ENCODE measurements at regions of chr3 and their contacts with region 1.

Region 1: DNA sequence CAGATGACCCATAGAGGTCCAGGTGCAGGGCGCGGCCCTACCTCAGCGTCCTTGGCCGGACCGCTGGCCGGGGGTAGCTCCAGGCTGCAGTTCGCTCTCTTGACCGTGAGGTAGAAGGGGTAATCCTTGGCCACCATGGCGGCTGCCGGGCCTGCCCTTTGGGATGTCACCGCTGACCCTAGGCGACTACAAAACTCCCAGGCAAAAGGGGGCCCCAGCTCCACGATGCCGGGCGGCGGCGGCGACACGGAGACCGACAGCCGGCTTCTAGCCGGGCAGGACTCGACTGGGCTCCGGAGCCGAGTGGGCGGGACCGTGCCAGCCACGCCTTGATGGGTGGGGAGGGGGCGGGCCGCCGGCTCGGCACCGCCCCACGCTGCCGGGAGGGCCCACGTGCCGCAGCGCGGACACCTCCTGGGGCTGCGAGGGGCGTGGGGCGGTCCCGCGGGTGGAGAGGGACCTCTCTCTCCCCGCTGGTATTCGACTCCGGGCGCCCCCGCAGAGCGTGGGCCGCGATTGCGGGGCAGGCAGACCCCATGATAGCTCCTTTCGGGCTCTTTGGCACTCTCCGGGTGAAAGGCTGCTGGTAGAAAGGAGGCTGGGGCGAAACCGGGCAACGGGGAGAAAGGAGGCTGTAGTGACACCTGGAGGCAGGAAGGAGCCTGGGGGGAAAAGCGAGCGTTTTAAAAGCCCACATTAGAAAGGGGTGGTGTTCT is at the start of gene ARHGEF3:
- DNase-seq: peak; percentile 86 to 90 (median 86)
- H3K4me3 ChIP-seq: peak within 1 kb of the TSS; percentile 86 to 87
- H3K4me3 Mint-ChIP-seq: peak within 1 kb of the TSS; percentile 92 to 99 (median 96)
- H3K27ac ChIP-seq: peak within 1 kb of the TSS; percentile 79
- H3K27ac Mint-ChIP-seq: peak within 1 kb of the TSS; percentile 85 to 98 (median 92)
- H3K4me1 ChIP-seq: peaks cover 38% of the 10 kb centered on the region
- H3K4me1 Mint-ChIP-seq: peaks cover 33 to 64% (median 43%) of the 10 kb centered on the region in 4 donors
- H3K27me3 ChIP-seq: no peaks in the 10 kb centered on the region
- H3K27me3 Mint-ChIP-seq: no peaks in the 10 kb centered on the region
- total RNA-seq, gene ARHGEF3: 120 TPM

Region 2: DNA sequence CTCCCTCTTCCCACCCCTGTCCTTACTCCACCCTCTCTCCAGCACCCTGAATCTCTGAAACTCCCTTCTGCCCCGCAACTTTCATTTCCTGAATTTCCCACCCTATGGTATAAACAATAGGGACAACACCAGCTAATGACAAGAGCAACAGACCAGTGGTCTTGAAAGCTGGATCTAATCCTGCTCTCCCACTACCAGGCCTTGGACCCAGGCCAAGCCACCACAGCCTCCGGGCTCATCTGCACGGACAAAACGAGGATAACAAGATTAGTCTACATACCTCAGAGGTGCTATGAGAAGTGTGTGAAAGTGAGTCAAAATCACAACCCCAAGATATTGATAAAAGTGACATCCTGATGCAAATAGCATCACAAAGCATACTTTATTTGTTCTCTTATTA is 462.1 kb before region 1 on chr3:
- CTCF ChIA-PET with region 1: no interaction called
- POLR2A ChIA-PET with region 1: no interaction called
- intact Hi-C with region 1: loop called (anchors 2 kb)
- DNase-seq: no peak
- H3K4me3 ChIP-seq: no peak overlapping the region
- H3K4me3 Mint-ChIP-seq: no peak overlapping the region
- H3K27ac ChIP-seq: no peak overlapping the region
- H3K27ac Mint-ChIP-seq: no peak overlapping the region
- H3K4me1 ChIP-seq: no peaks in the 10 kb centered on the region
- H3K4me1 Mint-ChIP-seq: no peaks in the 10 kb centered on the region
- H3K27me3 ChIP-seq: no peaks in the 10 kb centered on the region
- H3K27me3 Mint-ChIP-seq: peaks cover 3 to 7% of the 10 kb centered on the region in 2 donors

Region 3: GRCh38 chr3:56711344-56711743 is 90.5 kb before region 1 on chr3:
- CTCF ChIA-PET with region 1: interaction called, 213 read pairs
- POLR2A ChIA-PET with region 1: interaction called, 9 read pairs
- intact Hi-C with region 1: no loop called
- DNase-seq: no peak
- H3K4me3 ChIP-seq: no peak overlapping the region
- H3K4me3 Mint-ChIP-seq: no peak overlapping the region
- H3K27ac ChIP-seq: no peak overlapping the region
- H3K27ac Mint-ChIP-seq: peak overlapping the region in 2 of 7 donors; percentile 13 to 31
- H3K4me1 ChIP-seq: no peaks in the 10 kb centered on the region
- H3K4me1 Mint-ChIP-seq: peaks cover 0 to 2% (median 0%) of the 10 kb centered on the region in 4 donors
- H3K27me3 ChIP-seq: no peaks in the 10 kb centered on the region
- H3K27me3 Mint-ChIP-seq: no peaks in the 10 kb centered on the region

Region 4: DNA sequence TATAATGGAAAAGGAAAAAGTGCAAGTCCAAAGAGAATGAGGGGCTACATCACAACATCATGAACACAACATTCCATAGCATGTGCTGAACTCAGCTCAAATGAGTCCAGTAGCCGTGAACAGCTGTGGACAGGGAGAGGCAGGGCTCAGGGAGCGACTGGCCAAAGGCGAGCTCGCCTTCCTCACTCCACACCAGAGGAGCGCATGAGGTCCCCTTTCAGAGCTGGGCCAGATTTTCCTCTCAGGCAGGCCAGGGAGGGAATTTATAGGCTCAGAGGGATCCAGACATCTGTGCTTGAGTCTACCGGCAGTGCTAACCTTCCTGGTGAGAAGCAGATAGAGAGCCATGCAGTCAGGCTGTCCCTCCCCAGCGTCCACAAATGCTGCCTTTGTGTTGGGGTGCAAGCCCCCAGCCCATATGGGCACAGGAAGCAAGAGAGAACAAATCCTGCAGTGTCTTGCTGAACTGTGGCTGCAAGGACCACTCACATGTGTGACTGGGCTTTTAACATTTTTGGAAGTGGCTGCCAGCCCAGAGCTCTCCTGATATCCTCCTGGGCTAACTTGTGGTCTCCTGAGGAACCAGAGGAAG is 32.6 kb before region 1 on chr3:
- CTCF ChIA-PET with region 1: interaction called, 28 read pairs
- POLR2A ChIA-PET with region 1: interaction called, 7 read pairs
- intact Hi-C with region 1: no loop called
- DNase-seq: no peak
- H3K4me3 ChIP-seq: no peak overlapping the region
- H3K4me3 Mint-ChIP-seq: no peak overlapping the region
- H3K27ac ChIP-seq: no peak overlapping the region
- H3K27ac Mint-ChIP-seq: peak overlapping the region in 6 of 7 donors; percentile 9 to 79 (median 38)
- H3K4me1 ChIP-seq: peaks cover 53% of the 10 kb centered on the region
- H3K4me1 Mint-ChIP-seq: peaks cover 39 to 77% (median 58%) of the 10 kb centered on the region in 4 donors
- H3K27me3 ChIP-seq: no peaks in the 10 kb centered on the region
- H3K27me3 Mint-ChIP-seq: no peaks in the 10 kb centered on the region

Region 5: DNA sequence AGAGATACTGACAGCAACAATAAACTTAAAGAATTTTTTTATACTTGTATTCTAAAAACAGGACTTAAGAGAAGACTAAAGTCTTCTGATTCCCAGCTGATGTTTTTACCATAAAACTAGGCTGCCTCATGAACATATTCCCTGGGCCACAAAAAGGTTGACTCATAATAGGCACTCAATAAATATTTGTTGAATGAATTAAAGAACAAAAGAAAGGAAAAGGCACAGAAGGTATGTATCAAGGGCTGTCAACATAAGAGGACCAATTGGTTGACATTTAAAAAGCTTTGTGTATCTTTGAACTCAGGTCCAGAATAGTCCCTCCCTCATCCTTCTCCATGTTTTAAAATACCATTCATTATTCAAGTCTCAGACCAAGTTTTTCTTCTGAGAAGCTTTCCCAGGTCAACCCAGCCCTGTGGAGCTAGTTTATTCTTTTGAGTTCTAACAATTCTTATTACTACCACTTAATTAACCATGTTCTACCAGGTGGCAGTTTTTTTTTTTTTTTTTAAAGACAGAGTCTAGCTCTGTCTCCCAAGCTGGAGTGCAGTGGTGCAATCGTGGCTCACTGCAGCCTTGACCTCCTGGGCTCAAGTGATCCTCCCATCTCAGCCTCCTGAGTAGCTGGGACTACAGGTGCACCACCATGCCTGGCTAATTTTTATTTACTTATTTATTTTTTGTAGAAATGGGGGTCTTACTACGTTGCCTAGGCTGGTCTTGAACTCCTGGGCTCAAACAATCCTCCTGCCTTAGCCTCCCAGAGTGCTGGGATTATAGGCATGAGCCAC is 17.4 kb after region 1 on chr3:
- CTCF ChIA-PET with region 1: interaction called, 77 read pairs
- POLR2A ChIA-PET with region 1: interaction called, 77 read pairs
- intact Hi-C with region 1: no loop called
- DNase-seq: no peak
- H3K4me3 ChIP-seq: no peak overlapping the region
- H3K4me3 Mint-ChIP-seq: no peak overlapping the region
- H3K27ac ChIP-seq: no peak overlapping the region
- H3K27ac Mint-ChIP-seq: peak overlapping the region in 6 of 7 donors; percentile 6 to 90 (median 83)
- H3K4me1 ChIP-seq: peaks cover 60% of the 10 kb centered on the region
- H3K4me1 Mint-ChIP-seq: peaks cover 60 to 90% (median 68%) of the 10 kb centered on the region in 4 donors
- H3K27me3 ChIP-seq: no peaks in the 10 kb centered on the region
- H3K27me3 Mint-ChIP-seq: no peaks in the 10 kb centered on the region

Region 6: GRCh38 chr3:56887402-56888025 is 85.7 kb after region 1 on chr3:
- CTCF ChIA-PET with region 1: interaction called, 9 read pairs
- POLR2A ChIA-PET with region 1: interaction called, 11 read pairs
- intact Hi-C with region 1: no loop called
- DNase-seq: peak; percentile 26 to 46 (median 37)
- H3K4me3 ChIP-seq: peak overlapping the region in 1 of 2 donors; percentile 9
- H3K4me3 Mint-ChIP-seq: peak overlapping the region; percentile 70 to 81 (median 74)
- H3K27ac ChIP-seq: no peak overlapping the region
- H3K27ac Mint-ChIP-seq: peak overlapping the region; percentile 30 to 95 (median 81)
- H3K4me1 ChIP-seq: peaks cover 88% of the 10 kb centered on the region
- H3K4me1 Mint-ChIP-seq: peaks cover 68 to 95% (median 81%) of the 10 kb centered on the region in 4 donors
- H3K27me3 ChIP-seq: no peaks in the 10 kb centered on the region
- H3K27me3 Mint-ChIP-seq: no peaks in the 10 kb centered on the region

Region 7: DNA sequence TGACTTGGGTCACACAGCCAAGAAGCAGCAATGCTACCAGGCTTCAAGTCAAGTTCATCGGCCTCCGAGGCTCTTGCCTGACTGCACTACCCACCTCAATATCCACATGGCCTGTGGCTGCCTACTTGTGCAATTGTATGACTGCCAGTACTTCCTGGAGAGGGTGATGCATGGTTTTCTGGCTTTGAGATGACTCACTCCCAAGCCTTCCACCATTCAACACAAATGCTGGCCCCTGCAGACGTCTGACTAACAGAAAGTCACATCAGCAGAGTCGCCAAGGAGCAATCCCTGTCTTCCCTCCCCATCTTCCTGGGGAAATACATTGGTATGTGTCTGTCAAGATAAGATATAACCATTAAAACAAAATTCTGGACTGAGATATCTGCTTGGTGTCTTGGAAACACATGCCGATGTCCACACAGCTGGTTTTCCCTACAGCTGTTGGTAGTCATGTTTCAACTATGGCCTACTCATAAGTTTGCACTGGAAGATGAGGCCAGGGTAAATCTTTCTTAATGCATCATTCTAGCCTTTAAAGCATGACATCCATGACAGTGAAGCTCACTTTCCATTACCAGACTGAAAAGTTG is 179.1 kb after region 1 on chr3:
- CTCF ChIA-PET with region 1: interaction called, 197 read pairs
- POLR2A ChIA-PET with region 1: interaction called, 4 read pairs
- intact Hi-C with region 1: no loop called
- DNase-seq: no peak
- H3K4me3 ChIP-seq: no peak overlapping the region
- H3K4me3 Mint-ChIP-seq: no peak overlapping the region
- H3K27ac ChIP-seq: no peak overlapping the region
- H3K27ac Mint-ChIP-seq: no peak overlapping the region
- H3K4me1 ChIP-seq: no peaks in the 10 kb centered on the region
- H3K4me1 Mint-ChIP-seq: peaks cover 3 to 12% (median 8%) of the 10 kb centered on the region in 4 donors
- H3K27me3 ChIP-seq: no peaks in the 10 kb centered on the region
- H3K27me3 Mint-ChIP-seq: no peaks in the 10 kb centered on the region